ENCODE measurements at regions of chr9 and their contacts with region 1.

Region 1: GRCh38 chr9:34126207-34127034 is at the start of gene DCAF12:
- DNase-seq: peak; percentile 94
- H3K4me3 Mint-ChIP-seq: peak within 1 kb of the TSS; percentile 98
- H3K27ac Mint-ChIP-seq: peak within 1 kb of the TSS; percentile 94
- H3K4me1 Mint-ChIP-seq: peaks cover 35% of the 10 kb centered on the region
- H3K27me3 Mint-ChIP-seq: no peaks in the 10 kb centered on the region
- total RNA-seq, gene DCAF12: 32.5 to 35.4 TPM

Region 2: DNA sequence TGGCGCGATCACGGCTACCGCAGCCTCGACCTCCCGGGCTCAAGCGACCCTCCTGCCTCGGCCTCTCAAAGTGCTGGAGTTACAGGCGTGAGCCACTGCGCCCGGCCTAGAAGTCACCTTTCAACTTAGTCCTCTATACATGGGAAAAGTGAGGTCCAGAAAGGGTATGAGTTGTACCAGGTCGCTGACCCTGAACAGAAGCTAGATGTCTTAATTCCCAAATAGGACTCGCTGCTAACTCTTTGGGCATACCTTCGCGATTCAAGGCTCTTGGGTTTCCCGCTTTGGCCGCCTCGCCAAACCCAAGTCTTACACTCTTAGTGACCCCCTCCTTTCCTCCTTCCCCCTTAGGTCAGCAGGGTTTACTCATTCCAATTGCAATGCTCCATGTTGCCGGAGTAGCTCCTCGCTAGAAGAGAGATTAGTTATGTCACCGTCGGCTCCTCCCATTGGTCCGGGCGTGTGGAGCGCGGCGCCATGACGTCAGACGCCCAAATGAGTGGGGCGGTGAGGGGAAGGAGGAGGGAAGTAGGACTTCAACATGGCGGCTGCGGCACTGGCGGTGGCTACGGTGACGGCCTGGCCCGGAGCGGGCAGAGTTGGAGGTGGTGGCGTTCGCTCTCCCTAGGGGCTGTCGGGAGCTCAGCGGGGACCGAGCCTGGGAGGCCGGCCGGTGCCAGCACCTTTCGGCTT is 52.2 kb after region 1 on chr9 and contains the start of gene UBAP1:
- CTCF ChIA-PET with region 1: no interaction called
- POLR2A ChIA-PET with region 1: interaction called, 5 read pairs
- intact Hi-C with region 1: loop called (anchors 1 kb)
- DNase-seq: peak; percentile 98
- H3K4me3 Mint-ChIP-seq: peak within 1 kb of the TSS; percentile 90
- H3K27ac Mint-ChIP-seq: peak within 1 kb of the TSS; percentile 96
- H3K4me1 Mint-ChIP-seq: peaks cover 12% of the 10 kb centered on the region
- H3K27me3 Mint-ChIP-seq: no peaks in the 10 kb centered on the region
- total RNA-seq, gene UBAP1: 30.5 to 32.0 TPM

Measured in activated CD4-positive, alpha-beta memory T cell treated with anti-CD3 and anti-CD28 coated beads for 36 hours (primary cell).